Heart right ventricle (tissue), 16 donors: ENCODE measurements at regions of chr6 and their contacts with region 1.

Region 1: GRCh38 chr6:12395898-12396297 is 105.7 kb downstream of the EDN1 start:
- DNase-seq: no peak
- ATAC-seq: no peak
- H3K4me3 ChIP-seq: no peak overlapping the region
- H3K27ac ChIP-seq: no peak overlapping the region
- H3K4me1 ChIP-seq: peaks cover 0 to 12% (median 0%) of the 10 kb centered on the region in 9 donors
- H3K27me3 ChIP-seq: no peaks in the 10 kb centered on the region
- CTCF ChIP-seq: peak in 6 of 9 donors; percentile 7 to 44 (median 29)

Region 2: DNA sequence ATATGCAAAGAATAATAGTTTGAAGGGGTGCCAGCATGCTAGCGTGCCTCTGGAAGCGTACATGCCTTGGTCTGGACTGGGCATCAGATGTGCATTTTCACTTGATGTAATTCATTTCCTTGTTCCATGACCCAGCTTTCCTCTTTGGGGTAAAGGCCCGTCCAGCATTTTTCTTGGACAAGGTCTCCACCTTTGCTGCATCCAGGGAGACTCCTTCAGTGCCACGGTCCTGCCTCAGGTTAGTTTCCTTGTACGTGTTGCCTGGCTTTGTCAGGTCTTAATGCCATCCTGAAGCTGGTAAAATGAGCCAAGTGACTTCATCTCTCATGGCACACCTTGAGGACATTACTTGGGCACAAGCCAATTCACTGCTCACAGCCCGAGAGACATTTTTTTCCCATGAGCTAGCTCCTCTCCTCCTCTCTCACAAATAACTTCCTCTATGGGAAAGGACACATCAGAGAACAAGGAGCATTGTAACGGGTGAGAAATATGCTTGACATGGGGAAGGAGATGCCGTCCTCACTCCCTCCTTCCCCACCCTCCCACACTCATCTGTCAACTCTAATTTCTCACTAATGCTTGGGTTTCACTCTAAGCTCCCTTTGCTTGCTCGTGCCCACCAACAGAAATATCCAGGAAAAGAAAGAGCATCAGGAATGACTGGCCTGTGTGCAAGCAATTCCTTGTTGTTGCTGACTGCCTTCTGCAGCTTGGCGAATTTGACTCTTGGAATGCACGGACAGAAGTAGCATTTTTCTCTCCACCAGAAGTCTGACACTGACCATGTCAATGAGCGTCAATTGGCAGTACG is 81.7 kb before region 1 on chr6:
- intact Hi-C with region 1: loop called in 1 of 10 experiments (anchors 2 kb)
- DNase-seq: no peak
- ATAC-seq: no peak
- H3K4me3 ChIP-seq: no peak overlapping the region
- H3K27ac ChIP-seq: no peak overlapping the region
- H3K4me1 ChIP-seq: no peaks in the 10 kb centered on the region
- H3K27me3 ChIP-seq: peaks cover 0 to 3% (median 0%) of the 10 kb centered on the region in 7 donors
- CTCF ChIP-seq: no peak

Region 3: GRCh38 chr6:12595161-12595811 is 199.4 kb after region 1 on chr6:
- intact Hi-C with region 1: loop called in 7 of 10 experiments (anchors 5 to 10 kb)
- DNase-seq: no peak
- ATAC-seq: peak in 4 of 8 donors; percentile 35 to 55 (median 50)
- H3K4me3 ChIP-seq: no peak overlapping the region
- H3K27ac ChIP-seq: peak overlapping the region in 1 of 10 donors; percentile 26
- H3K4me1 ChIP-seq: peaks cover 0 to 18% (median 0%) of the 10 kb centered on the region in 9 donors
- H3K27me3 ChIP-seq: peaks cover 0 to 12% (median 0%) of the 10 kb centered on the region in 7 donors
- CTCF ChIP-seq: no peak